SK-N-SH (cell line): ENCODE measurements at regions of chr2 and their contacts with region 1.

Region 1: DNA sequence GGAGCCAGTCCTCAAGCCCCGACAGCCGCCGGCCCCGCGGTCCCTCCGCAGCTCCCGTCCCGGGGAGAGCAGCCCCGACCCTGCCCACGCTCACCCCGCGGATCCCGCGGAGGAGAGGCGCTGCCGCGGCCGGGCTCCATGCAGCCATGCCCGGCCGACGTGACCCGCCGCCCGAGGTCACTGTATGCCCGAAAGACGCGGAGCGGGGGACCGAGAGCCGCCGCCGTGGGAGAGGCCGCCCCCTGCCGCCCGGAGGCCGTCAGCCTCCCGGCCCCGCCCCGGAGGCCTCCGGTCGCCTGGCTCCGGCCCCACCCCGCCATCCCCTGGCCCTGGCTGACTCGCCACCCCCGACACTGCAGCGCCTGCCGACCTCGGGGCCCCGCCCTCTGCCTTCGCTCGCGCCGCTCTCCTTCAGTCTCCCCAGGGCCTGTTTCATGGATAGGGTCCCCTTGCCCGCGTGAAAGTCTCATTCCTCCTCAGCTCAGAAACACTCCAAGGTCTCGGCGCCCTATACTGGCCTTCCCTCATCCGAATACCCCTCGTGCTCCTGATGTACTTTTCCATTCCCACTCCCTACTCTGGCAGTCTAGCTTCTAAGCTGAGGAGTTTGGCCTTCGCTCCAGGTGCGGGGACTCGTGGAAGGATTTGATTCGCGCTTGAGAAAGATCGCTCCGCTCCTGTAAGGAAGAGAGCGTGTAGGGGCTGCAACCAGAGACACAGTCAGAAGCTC is at the start of gene BOLA3:
- DNase-seq: peak; percentile 99
- H3K4me3 ChIP-seq: peak within 1 kb of the TSS; percentile 93 to 99
- H3K27ac ChIP-seq: peak within 1 kb of the TSS; percentile 67 to 81
- H3K4me1 ChIP-seq: peaks cover 4 to 22% of the 10 kb centered on the region in 2 experiments; a peak in 3 of 4 replicates
- H3K27me3 ChIP-seq: no peaks in the 10 kb centered on the region
- CTCF ChIP-seq: peak; percentile 62
- EP300 ChIP-seq: no peak
- RAD21 ChIP-seq: peak; percentile 25; the same call in 1 of the 2 replicates
- polyA plus RNA-seq, gene BOLA3: 64.4 and 90.1 TPM in 2 replicates

Region 2: GRCh38 chr2:73343992-73344391 is 803.9 kb before region 1 on chr2:
- CTCF ChIA-PET with region 1: no interaction called
- POLR2A ChIA-PET with region 1: no interaction called
- DNase-seq: no peak
- H3K4me3 ChIP-seq: no peak overlapping the region
- H3K27ac ChIP-seq: no peak overlapping the region
- H3K4me1 ChIP-seq: no peaks in the 10 kb centered on the region; a peak in 1 of 4 replicates
- H3K27me3 ChIP-seq: peaks cover 23% of the 10 kb centered on the region; the same call in 1 of the 2 replicates
- CTCF ChIP-seq: no peak
- EP300 ChIP-seq: no peak
- RAD21 ChIP-seq: no peak

Region 3: GRCh38 chr2:73828818-73829570 is 318.9 kb before region 1 on chr2 and contains the start of gene STAMBP:
- CTCF ChIA-PET with region 1: interaction called, 155 read pairs
- POLR2A ChIA-PET with region 1: interaction called, 3 read pairs
- DNase-seq: peak; percentile 94
- H3K4me3 ChIP-seq: peak within 1 kb of the TSS; percentile 86 to 96
- H3K27ac ChIP-seq: peak within 1 kb of the TSS; percentile 87 to 88
- H3K4me1 ChIP-seq: peaks cover 14 to 19% of the 10 kb centered on the region in 2 experiments; a peak in 3 of 4 replicates
- H3K27me3 ChIP-seq: no peaks in the 10 kb centered on the region
- CTCF ChIP-seq: no peak
- EP300 ChIP-seq: no peak
- RAD21 ChIP-seq: no peak
- polyA plus RNA-seq, gene STAMBP: 42.2 and 54.5 TPM in 2 replicates

Region 4: GRCh38 chr2:74119912-74120825 is 27.7 kb before region 1 on chr2:
- CTCF ChIA-PET with region 1: interaction called, 14 read pairs
- POLR2A ChIA-PET with region 1: interaction called, 8 read pairs
- DNase-seq: peak; percentile 97
- H3K4me3 ChIP-seq: peak overlapping the region; percentile 74 to 84
- H3K27ac ChIP-seq: peak overlapping the region; percentile 90 to 92
- H3K4me1 ChIP-seq: no peaks in the 10 kb centered on the region; a peak in 1 of 4 replicates
- H3K27me3 ChIP-seq: no peaks in the 10 kb centered on the region
- CTCF ChIP-seq: peak; percentile 59
- EP300 ChIP-seq: peak in 1 of 2 experiments; percentile 26; a peak in 1 of 4 replicates
- RAD21 ChIP-seq: no peak

Region 5: DNA sequence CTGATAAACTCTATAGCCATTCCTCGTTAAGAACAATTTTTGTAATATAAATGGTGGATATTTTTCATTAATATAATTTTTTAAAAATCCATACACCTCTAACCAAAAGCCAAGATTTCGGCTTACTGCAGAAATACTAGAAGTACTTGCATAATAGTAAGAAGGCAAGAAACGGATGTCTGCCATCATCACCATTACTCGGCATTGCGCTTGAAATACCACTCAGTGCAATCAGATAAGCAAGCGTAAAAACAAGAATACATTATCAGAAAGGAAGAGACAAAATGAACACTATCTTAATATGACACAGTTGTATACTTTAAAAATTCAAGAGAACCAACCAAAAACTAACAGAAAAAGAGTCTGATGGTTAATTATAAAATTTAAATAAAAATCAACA is 15.1 kb after region 1 on chr2:
- CTCF ChIA-PET with region 1: interaction called, 18 read pairs
- POLR2A ChIA-PET with region 1: interaction called, 4 read pairs
- DNase-seq: no peak
- H3K4me3 ChIP-seq: no peak overlapping the region
- H3K27ac ChIP-seq: no peak overlapping the region
- H3K4me1 ChIP-seq: no peaks in the 10 kb centered on the region
- H3K27me3 ChIP-seq: no peaks in the 10 kb centered on the region
- CTCF ChIP-seq: no peak
- EP300 ChIP-seq: no peak
- RAD21 ChIP-seq: no peak

Region 6: GRCh38 chr2:74168739-74169138 is 20.8 kb after region 1 on chr2:
- CTCF ChIA-PET with region 1: interaction called, 18 read pairs
- POLR2A ChIA-PET with region 1: interaction called, 4 read pairs
- DNase-seq: no peak
- H3K4me3 ChIP-seq: no peak overlapping the region
- H3K27ac ChIP-seq: no peak overlapping the region
- H3K4me1 ChIP-seq: no peaks in the 10 kb centered on the region
- H3K27me3 ChIP-seq: no peaks in the 10 kb centered on the region
- CTCF ChIP-seq: no peak
- EP300 ChIP-seq: no peak
- RAD21 ChIP-seq: no peak

Region 7: GRCh38 chr2:74178201-74179062 is 30.5 kb after region 1 on chr2 and contains the start of gene MOB1A:
- CTCF ChIA-PET with region 1: interaction called, 3 read pairs
- POLR2A ChIA-PET with region 1: interaction called, 10 read pairs
- DNase-seq: peak; percentile 97
- H3K4me3 ChIP-seq: peak within 1 kb of the TSS; percentile 71 to 96
- H3K27ac ChIP-seq: peak within 1 kb of the TSS; percentile 87 to 94
- H3K4me1 ChIP-seq: peaks cover 4 to 6% of the 10 kb centered on the region in 2 experiments; a peak in 3 of 4 replicates
- H3K27me3 ChIP-seq: no peaks in the 10 kb centered on the region
- CTCF ChIP-seq: no peak
- EP300 ChIP-seq: no peak
- RAD21 ChIP-seq: no peak
- polyA plus RNA-seq, gene MOB1A: 15.3 and 19.7 TPM in 2 replicates

Region 8: DNA sequence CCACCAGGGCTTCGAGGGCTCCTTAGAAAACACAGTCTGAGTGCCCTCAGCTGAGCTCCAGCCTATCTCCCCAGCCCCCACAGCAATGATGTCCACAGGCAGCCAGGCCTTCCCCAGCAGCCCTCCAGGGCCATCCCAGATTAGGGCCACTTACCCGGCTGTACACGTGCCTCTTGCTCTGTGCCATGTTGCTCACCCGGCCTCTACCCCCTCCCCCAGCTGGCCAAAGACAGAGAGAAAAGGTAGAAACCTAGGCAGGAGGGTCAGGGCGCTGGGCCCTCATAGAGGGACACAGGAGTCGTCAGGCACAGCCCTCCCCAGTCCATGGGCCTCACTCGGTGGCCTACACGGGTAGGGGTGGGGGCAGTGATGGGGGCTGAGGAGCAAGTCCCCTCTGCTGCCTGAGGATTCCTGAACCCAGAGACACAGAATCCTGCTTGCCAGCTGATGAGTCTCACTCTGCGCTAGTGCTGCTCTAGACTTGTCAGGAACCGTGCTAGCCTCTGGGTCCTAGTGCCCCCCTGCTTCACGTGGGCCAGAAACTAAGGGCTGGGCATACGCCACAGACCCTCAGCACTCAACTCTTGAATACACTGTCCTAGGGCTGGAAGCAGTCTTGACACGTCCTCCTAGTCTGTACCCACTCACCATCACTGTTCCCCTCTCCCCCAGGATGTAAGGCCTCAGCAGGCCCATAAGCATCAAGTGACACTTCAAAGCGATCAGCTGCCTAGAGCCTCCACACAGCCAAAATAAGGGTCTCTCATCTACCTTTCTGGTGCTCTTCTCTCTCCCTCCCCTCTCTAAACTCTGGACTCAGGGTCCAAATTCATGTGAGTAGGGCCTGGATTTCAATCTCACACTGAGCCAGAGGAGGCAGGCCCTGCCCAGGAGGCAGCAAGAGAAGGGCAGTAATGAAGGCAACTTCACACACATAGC is 232.2 kb after region 1 on chr2 and contains the start of gene DCTN1:
- CTCF ChIA-PET with region 1: no interaction called
- POLR2A ChIA-PET with region 1: no interaction called
- DNase-seq: peak; percentile 83
- H3K4me3 ChIP-seq: peak within 1 kb of the TSS; percentile 46 to 47
- H3K27ac ChIP-seq: peak within 1 kb of the TSS; percentile 37 to 62; a peak in 3 of 4 replicates
- H3K4me1 ChIP-seq: peaks cover 7 to 20% of the 10 kb centered on the region in 2 experiments; a peak in 2 of 4 replicates
- H3K27me3 ChIP-seq: no peaks in the 10 kb centered on the region
- CTCF ChIP-seq: no peak
- EP300 ChIP-seq: no peak
- RAD21 ChIP-seq: no peak
- polyA plus RNA-seq, gene DCTN1: 88.9 and 91.1 TPM in 2 replicates